ENCODE measurements at regions of chr7 and their contacts with region 1.

Region 1: DNA sequence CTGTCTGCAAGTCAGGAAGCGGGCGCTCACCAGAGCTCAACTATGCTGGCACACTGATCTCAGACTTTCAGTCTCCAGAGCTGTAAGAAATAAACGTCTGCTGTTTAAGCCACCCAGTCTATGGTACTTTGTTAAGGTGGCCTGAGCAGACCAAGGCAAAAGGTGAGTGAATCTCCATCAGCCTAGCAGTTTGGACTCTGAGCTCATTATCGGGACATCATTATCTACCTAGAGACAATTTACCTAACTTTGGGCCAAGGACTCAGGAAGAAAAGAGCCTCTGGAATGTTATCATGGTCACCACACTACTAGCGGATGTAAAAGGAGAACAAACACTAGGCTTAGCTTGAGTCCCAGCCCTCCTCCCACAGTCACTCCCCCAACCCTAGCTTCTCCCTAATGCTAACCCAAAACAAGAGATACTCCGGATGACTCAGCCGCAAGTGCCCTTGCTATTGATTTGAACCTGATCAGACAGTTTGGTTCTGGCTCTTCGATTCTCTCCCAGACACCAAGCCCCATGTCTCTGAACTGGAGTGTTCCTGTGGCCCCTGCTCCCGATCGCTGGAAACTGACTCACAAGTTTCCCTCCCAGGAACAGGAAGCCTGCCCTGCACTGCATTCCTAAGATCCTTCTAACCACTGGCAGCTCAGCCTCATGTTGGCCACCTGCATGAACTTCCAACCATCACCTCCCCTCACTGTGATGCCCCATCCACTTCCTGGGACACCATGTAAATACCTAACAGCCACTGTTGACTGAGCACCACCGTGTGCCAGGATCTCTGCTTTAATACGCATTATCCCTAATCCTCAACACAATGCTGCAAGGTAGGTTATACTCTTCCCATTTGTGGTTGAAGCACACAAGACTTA is 34.5 kb downstream of the CREB3L2 start:
- DNase-seq: peak; percentile 86 to 92 (median 88)
- ATAC-seq: peak; percentile 84
- H3K4me3 ChIP-seq: no peak overlapping the region
- H3K27ac ChIP-seq: peak overlapping the region; percentile 82
- H3K4me1 ChIP-seq: peaks cover 39 to 55% of the 10 kb centered on the region in 2 experiments
- H3K27me3 ChIP-seq: no peaks in the 10 kb centered on the region
- CTCF ChIP-seq: no peak
- EP300 ChIP-seq: peak; percentile 91
- POLR2A ChIP-seq: no peak
- RAD21 ChIP-seq: peak in 1 of 2 experiments; percentile 20; a peak in 1 of 4 replicates

Region 2: GRCh38 chr7:137898839-137899721 is 68.3 kb before region 1 on chr7:
- CTCF ChIA-PET with region 1: no interaction called
- POLR2A ChIA-PET with region 1: no interaction called
- in situ Hi-C with region 1: no loop called
- intact Hi-C with region 1: loop called (anchors 2 kb)
- DNase-seq: peak; percentile 87 to 91 (median 90)
- ATAC-seq: peak; percentile 99
- H3K4me3 ChIP-seq: no peak overlapping the region
- H3K27ac ChIP-seq: peak overlapping the region; percentile 58
- H3K4me1 ChIP-seq: peaks cover 3 to 13% of the 10 kb centered on the region in 2 experiments; a peak in 3 of 5 replicates
- H3K27me3 ChIP-seq: no peaks in the 10 kb centered on the region
- CTCF ChIP-seq: peak; percentile 96 to 99 (median 97)
- EP300 ChIP-seq: no peak
- POLR2A ChIP-seq: no peak
- RAD21 ChIP-seq: peak; percentile 81 to 95

Region 3: DNA sequence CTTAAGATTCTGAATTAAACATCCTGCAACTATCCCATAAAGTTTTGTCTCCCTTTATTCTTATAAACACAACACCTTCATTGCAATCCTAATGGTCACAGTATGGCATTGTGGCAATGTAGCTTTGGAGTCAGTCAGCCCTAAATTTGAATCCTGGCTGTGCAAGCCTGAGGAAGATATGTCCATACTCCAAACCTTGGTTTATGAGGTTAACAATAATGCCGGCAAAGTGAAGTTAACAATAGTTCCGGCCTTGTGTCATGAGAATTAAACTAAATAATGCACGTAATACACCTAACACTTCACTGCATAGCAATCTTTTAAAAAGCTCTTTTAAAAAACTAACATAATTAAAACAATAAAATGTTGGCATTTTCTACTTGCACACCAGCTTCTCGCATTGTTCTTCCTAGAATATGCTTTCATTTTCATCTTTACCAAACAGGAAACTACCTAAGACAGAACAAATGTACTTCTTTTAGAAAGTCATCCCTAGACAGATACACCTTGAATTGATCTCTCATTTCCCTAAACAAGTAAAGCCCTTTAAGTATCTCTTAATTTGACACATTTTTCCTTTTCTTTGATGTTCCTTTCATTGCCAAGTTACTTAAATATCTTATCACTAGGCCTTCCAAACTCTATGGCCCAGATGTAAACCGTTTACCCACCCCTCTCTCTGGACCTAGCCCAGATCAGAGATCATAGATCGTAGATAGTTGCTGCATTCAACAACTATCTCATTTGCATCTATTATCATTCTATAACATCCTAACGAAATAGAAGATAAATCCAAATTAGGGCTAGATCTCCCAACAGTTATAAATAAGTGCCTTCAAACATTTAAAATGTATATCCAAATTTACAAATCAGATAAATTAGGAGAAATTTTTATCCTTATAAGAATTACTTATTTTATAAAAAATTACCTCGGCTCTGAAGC is 32.2 kb before region 1 on chr7:
- CTCF ChIA-PET with region 1: no interaction called
- POLR2A ChIA-PET with region 1: interaction called, 3 read pairs
- in situ Hi-C with region 1: no loop called
- intact Hi-C with region 1: loop called (anchors 2 kb)
- DNase-seq: no peak
- ATAC-seq: 0 out of 3 replicates have a peak, but pooled peaks have one; percentile 3
- H3K4me3 ChIP-seq: peak overlapping the region; percentile 9; the same call in 1 of the 2 replicates
- H3K27ac ChIP-seq: peak overlapping the region; percentile 60
- H3K4me1 ChIP-seq: peaks cover 18 to 58% of the 10 kb centered on the region in 2 experiments
- H3K27me3 ChIP-seq: no peaks in the 10 kb centered on the region
- CTCF ChIP-seq: no peak
- EP300 ChIP-seq: no peak
- POLR2A ChIP-seq: no peak
- RAD21 ChIP-seq: no peak

Region 4: DNA sequence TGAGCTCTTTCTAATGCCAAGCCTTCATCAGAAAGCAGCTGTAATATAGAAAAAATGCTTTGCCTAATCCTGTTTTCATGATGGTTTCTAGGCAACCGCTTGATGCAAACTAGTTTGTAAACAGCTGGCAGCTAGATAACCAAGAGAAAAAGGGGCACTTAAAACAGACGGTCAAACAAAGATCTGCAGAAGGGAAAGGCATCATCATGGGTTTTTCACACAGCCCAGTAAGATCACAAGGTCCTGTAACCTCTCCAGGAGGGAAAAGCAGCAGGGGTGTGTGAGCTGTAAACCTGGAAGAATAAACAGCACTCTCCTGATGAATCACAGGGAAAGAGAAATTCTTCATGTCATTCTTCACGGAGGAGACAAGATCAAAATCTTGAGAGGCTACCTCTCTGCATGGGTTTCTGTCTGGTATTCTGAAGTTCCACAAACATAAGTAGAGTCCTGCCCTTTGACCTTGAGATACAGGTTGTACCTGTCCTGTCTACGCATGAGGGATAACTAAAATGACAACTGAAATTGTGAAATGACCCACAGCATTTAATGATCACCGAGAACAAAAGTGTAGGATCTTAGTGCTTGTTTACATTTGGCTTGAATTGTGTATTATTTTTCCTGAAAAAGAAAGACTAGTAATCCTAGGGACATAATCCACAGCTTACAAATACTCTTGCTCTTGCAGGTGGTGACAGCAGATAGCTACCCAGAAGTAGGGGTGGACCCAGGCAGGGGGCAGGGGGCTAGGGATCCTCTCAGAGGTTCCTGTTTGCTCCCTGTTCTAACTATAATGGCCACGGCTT is 13.5 kb before region 1 on chr7:
- CTCF ChIA-PET with region 1: no interaction called
- POLR2A ChIA-PET with region 1: interaction called, 10 read pairs
- in situ Hi-C with region 1: no loop called
- intact Hi-C with region 1: no loop called
- DNase-seq: peak in 3 of 4 experiments; percentile 53 to 68 (median 53)
- ATAC-seq: peak; percentile 48
- H3K4me3 ChIP-seq: no peak overlapping the region
- H3K27ac ChIP-seq: peak overlapping the region; percentile 48
- H3K4me1 ChIP-seq: peaks cover 28 to 74% of the 10 kb centered on the region in 2 experiments
- H3K27me3 ChIP-seq: no peaks in the 10 kb centered on the region
- CTCF ChIP-seq: no peak
- EP300 ChIP-seq: no peak
- POLR2A ChIP-seq: no peak
- RAD21 ChIP-seq: no peak

Region 5: GRCh38 chr7:137985253-137985896 is 18.0 kb after region 1 on chr7:
- CTCF ChIA-PET with region 1: interaction called, 3 read pairs
- POLR2A ChIA-PET with region 1: interaction called, 14 read pairs
- in situ Hi-C with region 1: no loop called
- intact Hi-C with region 1: no loop called
- DNase-seq: no peak
- ATAC-seq: peak; percentile 10; the same call in 1 of the 3 replicates
- H3K4me3 ChIP-seq: no peak overlapping the region
- H3K27ac ChIP-seq: peak overlapping the region; percentile 38; the same call in 1 of the 3 replicates
- H3K4me1 ChIP-seq: peaks cover 41 to 53% of the 10 kb centered on the region in 2 experiments
- H3K27me3 ChIP-seq: no peaks in the 10 kb centered on the region
- CTCF ChIP-seq: no peak
- EP300 ChIP-seq: no peak
- POLR2A ChIP-seq: no peak
- RAD21 ChIP-seq: no peak

Region 6: GRCh38 chr7:137992550-137993394 is 25.4 kb after region 1 on chr7:
- CTCF ChIA-PET with region 1: no interaction called
- POLR2A ChIA-PET with region 1: interaction called, 15 read pairs
- in situ Hi-C with region 1: no loop called
- intact Hi-C with region 1: no loop called
- DNase-seq: peak in 3 of 4 experiments; percentile 33 to 60 (median 49)
- ATAC-seq: peak; percentile 73
- H3K4me3 ChIP-seq: no peak overlapping the region
- H3K27ac ChIP-seq: peak overlapping the region; percentile 77
- H3K4me1 ChIP-seq: peaks cover 43 to 78% of the 10 kb centered on the region in 2 experiments
- H3K27me3 ChIP-seq: no peaks in the 10 kb centered on the region
- CTCF ChIP-seq: no peak
- EP300 ChIP-seq: peak; percentile 3; the same call in 1 of the 2 replicates
- POLR2A ChIP-seq: no peak
- RAD21 ChIP-seq: no peak; a peak in 1 of 4 replicates

Region 7: GRCh38 chr7:138002096-138002827 is 34.9 kb after region 1 on chr7:
- CTCF ChIA-PET with region 1: no interaction called
- POLR2A ChIA-PET with region 1: interaction called, 7 read pairs
- in situ Hi-C with region 1: no loop called
- intact Hi-C with region 1: loop called (anchors 1 kb)
- DNase-seq: peak; percentile 99 to 100 (median 99)
- ATAC-seq: peak; percentile 93
- H3K4me3 ChIP-seq: peak overlapping the region; percentile 82
- H3K27ac ChIP-seq: peak overlapping the region; percentile 77
- H3K4me1 ChIP-seq: peaks cover 13 to 32% of the 10 kb centered on the region in 2 experiments
- H3K27me3 ChIP-seq: no peaks in the 10 kb centered on the region
- CTCF ChIP-seq: peak; percentile 90 to 99 (median 99)
- EP300 ChIP-seq: 0 out of 2 replicates have a peak, but pooled peaks have one; percentile 25
- POLR2A ChIP-seq: no peak
- RAD21 ChIP-seq: peak; percentile 53 to 64

Region 8: DNA sequence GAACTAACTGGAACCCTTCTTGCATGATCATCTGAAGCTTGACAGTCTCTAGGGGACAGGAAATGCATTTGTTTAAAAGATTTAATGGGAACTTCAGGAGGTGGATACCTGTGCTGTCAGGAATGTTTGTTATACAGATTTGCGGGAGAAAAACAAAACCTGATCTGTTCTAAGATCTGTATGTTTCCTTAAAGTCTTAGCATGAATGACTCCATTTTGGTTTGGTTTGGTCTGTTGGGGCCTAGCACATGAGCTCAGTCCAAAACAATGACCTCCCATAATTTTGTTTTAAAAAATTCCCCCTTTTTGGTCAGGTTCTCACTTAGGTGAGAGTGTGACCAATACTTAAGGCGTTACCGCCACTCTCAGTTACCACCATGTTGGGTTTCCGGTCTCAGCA is 247.5 kb after region 1 on chr7:
- CTCF ChIA-PET with region 1: no interaction called
- POLR2A ChIA-PET with region 1: no interaction called
- in situ Hi-C with region 1: no loop called
- intact Hi-C with region 1: no loop called
- DNase-seq: no peak
- ATAC-seq: no peak
- H3K4me3 ChIP-seq: no peak overlapping the region
- H3K27ac ChIP-seq: no peak overlapping the region
- H3K4me1 ChIP-seq: no peaks in the 10 kb centered on the region
- H3K27me3 ChIP-seq: no peaks in the 10 kb centered on the region
- CTCF ChIP-seq: no peak
- EP300 ChIP-seq: no peak
- POLR2A ChIP-seq: no peak
- RAD21 ChIP-seq: no peak